OCI-LY7 (cell line): ENCODE measurements at regions of chr17 and their contacts with region 1.

Region 1: GRCh38 chr17:7632492-7632894 is 2.6 kb downstream of the SHBG start:
- DNase-seq: peak; percentile 62
- H3K4me3 ChIP-seq: no peak overlapping the region
- H3K27ac ChIP-seq: no peak overlapping the region
- H3K4me1 ChIP-seq: no peaks in the 10 kb centered on the region
- CTCF ChIP-seq: peak; percentile 78

Region 2: GRCh38 chr17:7466639-7467341 is 165.7 kb before region 1 on chr17:
- CTCF ChIA-PET with region 1: no interaction called
- POLR2A ChIA-PET with region 1: no interaction called
- intact Hi-C with region 1: no loop called
- DNase-seq: no peak
- H3K4me3 ChIP-seq: no peak overlapping the region
- H3K27ac ChIP-seq: no peak overlapping the region
- H3K4me1 ChIP-seq: peaks cover 15% of the 10 kb centered on the region
- CTCF ChIP-seq: no peak

Region 3: GRCh38 chr17:7583253-7584109 is 49.0 kb before region 1 on chr17 and contains the start of gene MPDU1:
- CTCF ChIA-PET with region 1: no interaction called
- POLR2A ChIA-PET with region 1: no interaction called
- intact Hi-C with region 1: no loop called
- DNase-seq: peak; percentile 94
- H3K4me3 ChIP-seq: peak within 1 kb of the TSS; percentile 75
- H3K27ac ChIP-seq: peak within 1 kb of the TSS; percentile 78
- H3K4me1 ChIP-seq: peaks cover 33% of the 10 kb centered on the region
- CTCF ChIP-seq: no peak
- total RNA-seq, gene MPDU1: 30.4 and 34.5 TPM in 2 replicates

Region 4: DNA sequence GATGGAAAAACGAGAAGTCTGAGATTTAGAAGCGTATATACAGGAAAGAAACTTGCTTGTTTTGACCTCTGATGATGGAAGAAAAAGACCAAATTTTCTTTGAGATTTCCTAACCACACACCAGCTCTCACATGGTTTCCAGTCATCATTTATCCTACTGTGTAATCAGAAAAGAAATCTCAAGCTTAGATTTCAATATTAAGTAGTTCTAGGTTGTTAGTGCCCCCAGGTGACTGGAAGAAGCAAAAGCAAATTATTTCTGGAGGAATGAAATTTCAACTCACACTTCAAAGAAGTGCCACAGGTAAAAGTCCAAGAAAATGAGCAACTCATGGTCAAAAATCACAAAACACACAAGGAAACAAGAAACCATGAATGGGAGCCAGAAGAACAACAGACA is 149.7 kb after region 1 on chr17:
- CTCF ChIA-PET with region 1: no interaction called
- POLR2A ChIA-PET with region 1: no interaction called
- intact Hi-C with region 1: loop called (anchors 10 kb)
- DNase-seq: no peak
- H3K4me3 ChIP-seq: no peak overlapping the region
- H3K27ac ChIP-seq: no peak overlapping the region
- H3K4me1 ChIP-seq: no peaks in the 10 kb centered on the region
- CTCF ChIP-seq: peak; percentile 62